A549 (cell line): ENCODE measurements at regions of chr19 and their contacts with region 1.

Region 1: GRCh38 chr19:4791170-4792018 is at the start of gene FEM1A:
- DNase-seq: peak; percentile 91 to 100
- ATAC-seq: peak; percentile 99
- H3K4me3 ChIP-seq: peak within 1 kb of the TSS; percentile 93
- H3K27ac ChIP-seq: peak within 1 kb of the TSS; percentile 91 to 98
- H3K4me1 ChIP-seq: 0 out of 3 replicates have a peak, but pooled peaks cover 3% of the 10 kb centered on the region
- CTCF ChIP-seq: peak; percentile 91
- EP300 ChIP-seq: no peak
- POLR2A ChIP-seq: peak; percentile 64
- RAD21 ChIP-seq: peak; percentile 76 to 80
- polyA plus RNA-seq, gene FEM1A: 3.2 and 3.5 TPM in 2 replicates

Region 2: DNA sequence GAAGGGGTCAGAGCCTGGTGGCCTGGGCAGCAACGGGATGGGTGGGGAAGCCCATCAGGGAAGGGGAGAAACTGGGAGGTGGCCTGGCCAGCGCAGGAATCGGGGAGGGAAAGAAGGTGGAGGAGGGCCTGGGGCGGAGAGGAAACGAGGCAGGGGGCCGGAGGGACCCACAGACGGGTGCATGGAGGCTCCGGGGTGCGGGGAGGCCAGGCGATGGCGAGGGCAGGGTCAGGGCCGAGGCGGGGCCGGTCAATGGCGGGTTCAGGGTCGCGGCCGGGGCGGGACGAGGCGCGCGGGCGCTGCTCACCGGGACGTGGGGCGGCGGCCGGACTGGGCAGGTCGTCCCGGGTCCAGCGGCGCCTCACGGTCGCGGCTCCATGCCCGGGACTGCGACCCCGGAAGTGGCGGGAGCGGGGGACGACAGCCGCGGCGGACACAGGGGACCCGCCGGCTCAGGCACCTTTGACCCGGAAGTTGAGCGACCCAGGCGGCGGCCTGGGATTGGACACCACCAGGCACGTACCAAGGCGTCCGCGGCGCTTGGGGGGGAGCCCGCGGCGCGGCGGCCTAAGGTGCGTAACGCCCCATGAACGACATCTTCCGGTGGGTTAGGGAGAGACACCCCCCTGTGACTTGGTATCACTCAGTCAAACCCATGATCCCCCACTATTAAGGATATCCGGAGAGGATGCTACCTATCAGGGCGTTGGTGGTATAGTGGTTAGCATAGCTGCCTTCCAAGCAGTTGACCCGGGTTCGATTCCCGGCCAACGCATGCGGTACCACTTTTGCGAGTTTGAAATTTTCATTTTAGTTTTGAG is 67.8 kb before region 1 on chr19 and contains the start of gene DPP9:
- CTCF ChIA-PET with region 1: interaction called, 222 read pairs
- POLR2A ChIA-PET with region 1: interaction called, 9 read pairs
- DNase-seq: peak; percentile 96 to 98
- ATAC-seq: peak; percentile 92 to 94
- H3K4me3 ChIP-seq: peak within 1 kb of the TSS; percentile 79
- H3K27ac ChIP-seq: peak within 1 kb of the TSS; percentile 86 to 94
- H3K4me1 ChIP-seq: peaks cover 26% of the 10 kb centered on the region
- CTCF ChIP-seq: peak; percentile 22; the same call in 1 of the 3 replicates
- EP300 ChIP-seq: no peak
- POLR2A ChIP-seq: no peak; the same call in 1 of the 2 replicates
- RAD21 ChIP-seq: peak; percentile 45 to 60
- polyA plus RNA-seq, gene DPP9: 10.1 and 16.3 TPM in 2 replicates

Region 3: GRCh38 chr19:4744451-4745174 is 46.8 kb before region 1 on chr19:
- CTCF ChIA-PET with region 1: interaction called, 222 read pairs
- POLR2A ChIA-PET with region 1: no interaction called
- DNase-seq: peak in 1 of 2 experiments; percentile 52
- ATAC-seq: peak; percentile 77 to 93
- H3K4me3 ChIP-seq: no peak overlapping the region
- H3K27ac ChIP-seq: peak overlapping the region in 1 of 2 experiments; percentile 42; a peak in 1 of 6 replicates
- H3K4me1 ChIP-seq: peaks cover 10% of the 10 kb centered on the region; the same call in 2 of the 3 replicates
- CTCF ChIP-seq: no peak
- EP300 ChIP-seq: no peak
- POLR2A ChIP-seq: no peak
- RAD21 ChIP-seq: no peak

Region 4: DNA sequence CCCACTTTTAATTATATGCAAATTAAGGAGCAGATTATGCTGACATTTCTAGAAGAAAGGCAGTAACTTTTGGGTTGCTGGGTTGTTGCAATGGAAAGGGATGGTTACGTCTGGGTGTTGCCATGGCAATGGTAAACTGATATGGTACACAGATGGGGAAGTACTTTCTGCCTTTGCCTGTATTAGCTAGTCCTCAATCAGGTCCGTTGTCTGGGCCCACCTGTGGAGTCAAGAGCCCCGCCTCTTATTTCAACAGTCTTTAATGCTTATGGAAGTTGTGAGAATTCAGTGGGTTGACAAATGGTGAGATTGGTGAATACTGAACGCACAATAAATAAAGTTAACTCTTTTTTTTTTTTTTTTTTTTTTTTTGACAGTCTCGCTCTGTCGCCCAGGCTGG is 37.1 kb before region 1 on chr19:
- CTCF ChIA-PET with region 1: interaction called, 12 read pairs
- POLR2A ChIA-PET with region 1: no interaction called
- DNase-seq: no peak
- ATAC-seq: no peak
- H3K4me3 ChIP-seq: no peak overlapping the region
- H3K27ac ChIP-seq: no peak overlapping the region
- H3K4me1 ChIP-seq: peaks cover under 1% of the 10 kb centered on the region; the same call in 1 of the 3 replicates
- CTCF ChIP-seq: no peak
- EP300 ChIP-seq: no peak
- POLR2A ChIP-seq: no peak
- RAD21 ChIP-seq: no peak

Region 5: GRCh38 chr19:4763021-4763420 is 28.4 kb before region 1 on chr19:
- CTCF ChIA-PET with region 1: interaction called, 10 read pairs
- POLR2A ChIA-PET with region 1: no interaction called
- DNase-seq: no peak
- ATAC-seq: no peak
- H3K4me3 ChIP-seq: no peak overlapping the region
- H3K27ac ChIP-seq: no peak overlapping the region
- H3K4me1 ChIP-seq: peaks cover 7% of the 10 kb centered on the region; the same call in 1 of the 3 replicates
- CTCF ChIP-seq: no peak
- EP300 ChIP-seq: no peak
- POLR2A ChIP-seq: no peak
- RAD21 ChIP-seq: no peak

Region 6: DNA sequence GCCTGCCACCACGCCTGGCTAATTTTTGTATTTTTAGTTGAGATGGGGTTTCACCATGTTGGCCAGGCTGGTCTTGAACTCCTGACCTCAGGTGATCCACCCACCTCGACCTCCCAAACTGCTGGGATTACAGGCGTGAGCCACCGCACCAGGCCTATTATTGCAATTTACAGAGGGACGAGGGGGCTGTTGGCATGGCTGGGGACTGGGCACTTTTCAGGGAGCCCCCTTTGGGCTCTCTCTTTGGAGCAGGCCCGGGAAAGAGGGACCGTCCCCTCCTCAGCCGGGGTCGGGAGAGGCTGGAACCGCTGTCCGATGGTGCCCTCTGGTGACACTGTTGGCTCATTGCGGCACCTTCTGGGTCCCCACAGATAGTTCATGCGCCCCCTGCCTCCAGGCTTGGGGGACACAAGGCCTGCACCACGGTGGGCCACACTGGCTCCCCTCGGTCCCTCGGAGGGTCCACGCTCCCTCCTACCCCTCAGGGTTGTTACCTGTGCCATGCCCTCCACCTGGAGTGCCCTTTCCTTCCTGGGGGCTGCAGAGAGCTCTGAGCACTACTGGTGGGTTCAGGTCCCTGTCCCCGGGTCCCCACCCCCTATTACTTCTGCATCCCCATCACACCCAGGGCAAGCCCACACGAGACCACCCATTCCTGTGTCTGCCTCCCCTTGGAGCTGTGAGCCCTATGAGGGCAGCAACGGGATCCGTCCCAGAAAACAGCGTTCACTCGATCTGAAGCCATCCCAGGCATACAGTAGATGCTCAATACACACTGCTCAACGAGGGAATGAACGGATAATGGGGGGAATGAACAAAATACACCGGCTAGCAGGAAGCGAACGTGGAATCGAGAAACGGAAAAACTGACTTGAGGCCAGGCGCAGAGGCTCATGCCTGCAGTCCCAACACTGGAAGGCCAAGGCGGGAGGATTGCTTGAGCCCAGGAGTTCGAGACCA is 12.6 kb after region 1 on chr19:
- CTCF ChIA-PET with region 1: interaction called, 27 read pairs
- POLR2A ChIA-PET with region 1: interaction called, 8 read pairs
- DNase-seq: peak; percentile 47 to 52
- ATAC-seq: peak; percentile 88 to 93
- H3K4me3 ChIP-seq: no peak overlapping the region
- H3K27ac ChIP-seq: no peak overlapping the region
- H3K4me1 ChIP-seq: no peaks in the 10 kb centered on the region
- CTCF ChIP-seq: peak; percentile 67
- EP300 ChIP-seq: no peak
- POLR2A ChIP-seq: no peak
- RAD21 ChIP-seq: peak; percentile 69 to 80